ENCODE measurements at regions of chr12 and their contacts with region 1.

Region 1: GRCh38 chr12:32302218-32303173 is 96.9 kb upstream of the FGD4 start:
- DNase-seq: no peak
- H3K4me3 ChIP-seq: no peak overlapping the region
- H3K27ac ChIP-seq: no peak overlapping the region
- H3K4me1 ChIP-seq: no peaks in the 10 kb centered on the region
- H3K27me3 ChIP-seq: no peaks in the 10 kb centered on the region
- CTCF ChIP-seq: peak in 3 of 6 experiments; percentile 14 to 43 (median 39)
- POLR2A ChIP-seq: no peak

Region 2: GRCh38 chr12:31682136-31682962 is 620.1 kb before region 1 on chr12:
- intact Hi-C with region 1: loop called (anchors 10 kb)
- DNase-seq: peak; percentile 9
- H3K4me3 ChIP-seq: no peak overlapping the region
- H3K27ac ChIP-seq: no peak overlapping the region
- H3K4me1 ChIP-seq: peaks cover 0 to 10% (median 0%) of the 10 kb centered on the region in 3 donors
- H3K27me3 ChIP-seq: no peaks in the 10 kb centered on the region
- CTCF ChIP-seq: peak; percentile 56 to 83 (median 60)
- POLR2A ChIP-seq: no peak

Region 3: DNA sequence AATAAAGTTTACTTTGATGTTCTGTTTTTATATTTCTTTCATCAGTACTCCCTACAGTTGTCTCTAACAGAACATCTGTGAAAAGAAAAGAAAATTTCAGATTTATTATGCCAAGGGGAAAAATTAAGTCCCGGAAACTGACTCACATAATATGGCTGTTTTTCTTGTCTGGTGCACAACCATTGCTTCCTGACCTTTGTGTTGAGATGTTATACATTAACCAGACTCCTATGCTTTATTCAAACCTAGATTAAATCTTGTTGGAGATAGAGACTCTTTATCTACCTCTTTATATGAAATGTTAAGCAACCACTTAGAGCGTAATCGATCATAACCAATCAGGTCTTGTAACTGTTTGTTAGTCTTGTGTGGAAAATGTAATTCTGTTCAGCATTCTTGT is 233.4 kb before region 1 on chr12:
- intact Hi-C with region 1: loop called (anchors 10 kb)
- DNase-seq: no peak
- H3K4me3 ChIP-seq: no peak overlapping the region
- H3K27ac ChIP-seq: no peak overlapping the region
- H3K4me1 ChIP-seq: no peaks in the 10 kb centered on the region
- H3K27me3 ChIP-seq: no peaks in the 10 kb centered on the region
- CTCF ChIP-seq: no peak
- POLR2A ChIP-seq: no peak

Region 4: GRCh38 chr12:32399337-32400113 is 97.0 kb after region 1 on chr12 and contains the start of gene FGD4:
- intact Hi-C with region 1: no loop called
- DNase-seq: peak; percentile 12
- H3K4me3 ChIP-seq: peak within 1 kb of the TSS; percentile 68 to 81 (median 75)
- H3K27ac ChIP-seq: peak within 1 kb of the TSS; percentile 89 to 94 (median 92)
- H3K4me1 ChIP-seq: peaks cover 5 to 40% (median 9%) of the 10 kb centered on the region in 3 donors
- H3K27me3 ChIP-seq: peaks cover 0 to 10% (median 0%) of the 10 kb centered on the region in 4 donors
- CTCF ChIP-seq: peak in 5 of 6 experiments; percentile 2 to 34 (median 23)
- POLR2A ChIP-seq: peak in 3 of 4 donors; percentile 65 to 90 (median 85)
- total RNA-seq, gene FGD4: 17.0 to 49.8 (median 25.6) TPM

Measured in esophagus squamous epithelium (tissue), 5 donors.